GM12878 (cell line): ENCODE measurements at regions of chr11 and their contacts with region 1.

Region 1: DNA sequence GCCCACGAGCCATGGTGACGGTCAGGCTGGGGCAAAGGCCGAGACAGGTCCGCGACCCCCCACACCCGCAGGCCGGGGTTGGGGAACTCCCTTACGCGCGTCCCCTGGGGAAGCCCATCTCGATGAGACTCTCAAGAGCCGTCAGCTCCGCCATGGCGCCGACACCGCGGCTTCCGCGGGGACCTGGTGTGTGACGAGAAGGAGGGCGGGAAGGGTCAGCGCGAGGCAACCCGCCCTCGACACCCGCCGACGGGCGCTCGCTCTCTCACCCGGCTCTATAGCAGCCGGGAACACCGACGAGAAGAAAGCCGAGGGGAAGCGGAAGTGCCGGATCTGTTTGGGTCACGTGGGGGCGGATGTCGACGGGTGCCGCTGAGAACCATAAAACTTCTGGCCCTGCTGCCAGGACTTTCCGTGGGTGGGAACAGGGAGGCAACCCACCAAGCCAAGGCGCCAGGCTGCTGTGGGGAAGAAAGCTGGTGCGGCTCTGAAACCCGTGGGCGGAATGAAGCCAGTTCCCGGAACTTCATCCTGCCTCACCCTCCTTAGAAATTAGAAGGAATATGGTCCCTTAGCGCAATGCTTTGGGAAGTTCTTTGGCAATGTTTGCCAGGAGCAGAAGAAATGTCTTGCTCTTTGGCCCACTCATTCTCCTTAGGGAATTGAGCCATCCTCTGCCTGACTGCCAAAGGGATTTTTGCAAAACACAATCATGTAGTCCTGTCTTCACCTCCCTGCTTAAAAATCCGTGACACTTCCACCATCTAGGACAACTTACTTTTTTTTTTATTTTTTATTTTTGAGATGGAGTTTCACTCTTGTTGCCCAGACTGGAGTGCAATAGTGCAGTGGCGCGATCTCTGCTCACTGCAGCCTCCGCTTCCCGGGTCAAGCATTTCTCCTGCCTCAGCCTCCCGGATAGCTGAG is at the start of gene UBXN1:
- DNase-seq: no peak
- ATAC-seq: peak; percentile 90
- H3K4me3 ChIP-seq: peak within 1 kb of the TSS; percentile 89
- H3K27ac ChIP-seq: peak within 1 kb of the TSS; percentile 94
- H3K4me1 ChIP-seq: peaks cover 11% of the 10 kb centered on the region
- H3K27me3 ChIP-seq: no peaks in the 10 kb centered on the region
- CTCF ChIP-seq: no peak
- EP300 ChIP-seq: peak in 1 of 2 experiments; percentile 42; a peak in 1 of 4 replicates
- POLR2A ChIP-seq: peak; percentile 94
- RAD21 ChIP-seq: no peak
- polyA plus RNA-seq, gene UBXN1: 7.0 to 20.7 TPM

Region 2: DNA sequence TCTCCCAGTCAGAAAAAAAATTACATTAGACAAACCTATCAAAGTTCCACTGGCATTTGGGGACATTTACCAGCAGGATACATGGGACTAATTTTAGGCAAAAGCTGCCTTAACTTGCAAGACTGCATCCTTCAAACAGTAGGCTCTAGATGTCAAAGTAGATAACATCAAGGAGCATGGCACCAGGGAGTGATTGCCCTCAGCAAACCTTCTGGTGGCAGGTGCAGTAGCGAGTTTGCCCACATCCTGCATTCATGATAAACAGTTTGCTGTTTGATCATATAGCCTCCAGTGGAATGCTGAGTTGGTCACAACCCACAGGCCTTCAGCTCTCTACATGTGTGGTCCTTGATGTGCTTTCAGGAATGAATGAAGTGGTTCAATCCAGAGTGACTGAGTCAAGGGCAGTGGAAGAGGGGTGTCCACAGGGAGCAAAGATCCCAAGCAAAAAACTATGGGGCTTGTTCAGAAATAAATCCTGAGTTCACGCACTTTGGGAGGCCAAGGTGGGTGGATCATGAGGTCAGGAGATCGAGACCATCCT is 425.0 kb before region 1 on chr11:
- CTCF ChIA-PET with region 1: no interaction called
- POLR2A ChIA-PET with region 1: no interaction called
- RAD21 ChIA-PET with region 1: no interaction called
- SMC1A ChIA-PET with region 1: no interaction called
- in situ Hi-C with region 1: no loop called
- intact Hi-C with region 1: no loop called
- DNase-seq: no peak
- ATAC-seq: no peak
- H3K4me3 ChIP-seq: no peak overlapping the region
- H3K27ac ChIP-seq: no peak overlapping the region
- H3K4me1 ChIP-seq: no peaks in the 10 kb centered on the region
- H3K27me3 ChIP-seq: no peaks in the 10 kb centered on the region
- CTCF ChIP-seq: no peak
- EP300 ChIP-seq: no peak
- POLR2A ChIP-seq: no peak
- RAD21 ChIP-seq: no peak

Region 3: DNA sequence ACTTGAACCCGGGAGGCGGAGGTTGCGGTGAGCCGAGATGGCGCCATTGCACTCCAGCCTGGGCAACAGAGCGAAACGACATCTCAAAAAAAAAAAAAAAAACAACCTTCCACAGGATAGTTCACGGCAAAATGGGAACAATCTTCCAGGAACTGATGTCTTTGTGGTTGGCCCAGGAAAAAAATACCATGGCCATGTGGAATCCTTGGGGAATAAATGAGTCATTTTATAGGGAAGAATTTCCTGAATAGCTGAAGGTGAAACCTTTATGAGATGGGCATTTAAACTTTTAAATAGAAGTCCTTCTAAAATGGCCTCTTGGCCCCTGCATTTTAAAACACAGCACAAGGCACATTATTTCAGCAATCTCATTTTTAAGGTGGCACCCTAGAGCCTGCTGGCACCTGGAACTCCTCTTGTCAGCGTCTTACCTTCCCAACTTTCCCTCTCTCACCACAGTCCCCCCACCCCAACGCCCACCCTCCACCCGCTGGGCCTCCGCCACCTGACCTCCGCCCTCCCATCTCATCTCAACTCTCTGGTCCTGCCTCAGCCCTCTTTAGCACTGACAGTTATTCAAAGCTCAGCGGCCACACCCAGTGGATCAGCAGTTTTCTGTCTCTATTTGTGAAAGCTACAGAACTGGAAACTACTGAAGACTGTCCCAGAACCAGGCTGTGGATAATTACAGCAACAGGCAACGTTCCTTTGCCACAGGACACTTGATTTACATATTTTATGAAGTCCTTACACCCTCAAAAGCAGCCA is 217.1 kb before region 1 on chr11:
- CTCF ChIA-PET with region 1: no interaction called
- POLR2A ChIA-PET with region 1: no interaction called
- RAD21 ChIA-PET with region 1: no interaction called
- SMC1A ChIA-PET with region 1: no interaction called
- in situ Hi-C with region 1: no loop called
- intact Hi-C with region 1: loop called (anchors 10 kb)
- DNase-seq: no peak
- ATAC-seq: no peak
- H3K4me3 ChIP-seq: no peak overlapping the region
- H3K27ac ChIP-seq: no peak overlapping the region
- H3K4me1 ChIP-seq: peaks cover 9% of the 10 kb centered on the region; the same call in 1 of the 2 replicates
- H3K27me3 ChIP-seq: no peaks in the 10 kb centered on the region
- CTCF ChIP-seq: no peak
- EP300 ChIP-seq: no peak
- POLR2A ChIP-seq: no peak
- RAD21 ChIP-seq: no peak

Region 4: GRCh38 chr11:62497132-62497915 is 181.7 kb before region 1 on chr11:
- CTCF ChIA-PET with region 1: no interaction called
- POLR2A ChIA-PET with region 1: no interaction called
- RAD21 ChIA-PET with region 1: no interaction called
- SMC1A ChIA-PET with region 1: no interaction called
- in situ Hi-C with region 1: no loop called
- intact Hi-C with region 1: no loop called
- DNase-seq: peak; percentile 13
- ATAC-seq: peak; percentile 75
- H3K4me3 ChIP-seq: no peak overlapping the region
- H3K27ac ChIP-seq: no peak overlapping the region
- H3K4me1 ChIP-seq: no peaks in the 10 kb centered on the region
- H3K27me3 ChIP-seq: peaks cover 0 to 2% of the 10 kb centered on the region in 2 experiments; a peak in 1 of 4 replicates
- CTCF ChIP-seq: peak; percentile 31 to 53 (median 37); a peak in 4 of 6 replicates
- EP300 ChIP-seq: no peak
- POLR2A ChIP-seq: no peak
- RAD21 ChIP-seq: peak; percentile 57

Region 5: DNA sequence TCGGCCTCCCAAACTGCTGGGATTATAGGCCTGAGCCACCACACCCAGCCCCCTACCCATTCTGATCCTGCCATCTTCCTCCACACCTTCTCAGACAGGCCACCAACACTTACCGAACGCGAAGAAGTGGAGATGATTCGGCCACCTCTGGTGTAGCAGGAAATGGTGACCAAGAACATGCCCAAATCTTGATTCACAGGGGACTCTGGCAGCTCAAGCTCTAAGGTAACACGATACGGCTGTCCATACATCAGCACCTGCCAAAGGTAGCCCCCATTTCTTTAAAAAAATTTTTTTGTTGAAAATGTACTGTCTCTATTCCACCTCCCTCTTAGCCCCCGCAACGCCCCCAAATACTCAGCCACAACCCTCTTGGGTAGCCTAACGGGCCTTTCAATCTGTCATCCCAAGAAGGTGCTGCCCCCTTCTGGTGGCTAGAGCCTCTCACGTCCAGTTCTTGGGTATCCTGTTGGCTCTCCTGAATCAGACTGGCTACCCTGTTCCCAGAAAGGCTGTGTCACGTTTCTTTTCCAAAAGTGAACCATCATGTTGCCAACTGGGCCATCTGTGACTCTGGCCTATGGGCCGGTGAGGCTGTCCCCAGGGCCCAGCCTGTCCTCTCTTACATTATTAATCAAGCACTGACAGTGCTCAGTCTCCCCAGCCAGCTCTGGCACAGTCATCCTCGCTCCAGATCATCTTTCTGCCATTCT is 15.6 kb after region 1 on chr11:
- CTCF ChIA-PET with region 1: interaction called, 24 read pairs
- POLR2A ChIA-PET with region 1: interaction called, 5 read pairs
- RAD21 ChIA-PET with region 1: interaction called, 4 read pairs
- SMC1A ChIA-PET with region 1: interaction called, 5 read pairs
- in situ Hi-C with region 1: no loop called
- intact Hi-C with region 1: no loop called
- DNase-seq: no peak
- ATAC-seq: peak; percentile 99
- H3K4me3 ChIP-seq: no peak overlapping the region
- H3K27ac ChIP-seq: no peak overlapping the region
- H3K4me1 ChIP-seq: no peaks in the 10 kb centered on the region
- H3K27me3 ChIP-seq: no peaks in the 10 kb centered on the region
- CTCF ChIP-seq: peak; percentile 79 to 86 (median 82)
- EP300 ChIP-seq: no peak
- POLR2A ChIP-seq: no peak
- RAD21 ChIP-seq: peak; percentile 83

Region 6: DNA sequence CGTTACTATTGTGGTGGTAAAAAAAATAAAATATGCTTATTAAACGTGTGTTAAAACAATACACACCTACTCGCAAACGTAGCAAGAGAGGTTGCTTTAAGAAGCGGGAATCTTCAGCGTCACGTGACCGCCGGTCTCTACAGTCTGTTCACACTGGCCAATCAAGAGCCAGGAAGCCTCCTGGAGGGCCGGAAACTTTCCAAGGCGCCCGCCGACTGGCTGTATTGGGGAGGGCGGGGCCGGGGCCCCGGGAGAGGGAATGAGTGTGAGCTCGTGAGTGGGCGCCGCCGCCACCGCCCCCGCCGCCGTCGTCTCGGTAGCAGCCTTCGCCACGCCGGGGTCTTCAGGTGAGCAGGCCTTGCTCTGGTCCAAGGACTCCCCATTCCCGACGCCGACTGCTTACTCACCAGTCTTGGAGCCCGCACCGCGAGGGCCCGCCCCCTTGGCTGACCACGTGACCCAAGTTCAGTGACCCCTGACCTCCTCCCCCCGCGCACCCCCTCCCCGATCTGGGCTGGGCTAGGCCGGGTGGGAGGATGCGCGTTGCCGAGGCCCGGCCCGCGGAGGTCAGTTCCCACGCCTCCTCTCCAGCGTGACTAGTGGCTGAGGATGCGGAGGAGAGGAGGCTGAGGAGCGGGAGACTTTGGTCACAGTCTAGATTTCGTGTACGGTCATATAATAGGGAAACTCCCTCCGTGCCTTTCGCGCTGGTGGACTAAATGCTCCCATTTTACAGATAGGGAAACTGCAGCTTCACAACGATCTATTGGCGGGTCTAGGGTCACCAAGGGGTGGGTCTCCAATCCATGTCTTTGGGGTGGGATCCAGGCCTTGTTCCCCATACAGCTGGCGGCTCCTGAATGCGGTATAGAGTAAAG is 92.3 kb after region 1 on chr11 and contains the start of gene TAF6L:
- CTCF ChIA-PET with region 1: interaction called, 18 read pairs
- POLR2A ChIA-PET with region 1: interaction called, 3 read pairs
- RAD21 ChIA-PET with region 1: interaction called, 4 read pairs
- SMC1A ChIA-PET with region 1: interaction called, 5 read pairs
- in situ Hi-C with region 1: no loop called
- intact Hi-C with region 1: no loop called
- DNase-seq: peak; percentile 77
- ATAC-seq: peak; percentile 92
- H3K4me3 ChIP-seq: peak within 1 kb of the TSS; percentile 86
- H3K27ac ChIP-seq: peak within 1 kb of the TSS; percentile 82
- H3K4me1 ChIP-seq: peaks cover 17% of the 10 kb centered on the region
- H3K27me3 ChIP-seq: no peaks in the 10 kb centered on the region
- CTCF ChIP-seq: no peak
- EP300 ChIP-seq: 0 out of 4 replicates have a peak, but pooled peaks of 1 of the 2 experiments have one; percentile 6
- POLR2A ChIP-seq: peak; percentile 83
- RAD21 ChIP-seq: no peak
- polyA plus RNA-seq, gene TAF6L: 0.15 to 0.39 TPM

Region 7: DNA sequence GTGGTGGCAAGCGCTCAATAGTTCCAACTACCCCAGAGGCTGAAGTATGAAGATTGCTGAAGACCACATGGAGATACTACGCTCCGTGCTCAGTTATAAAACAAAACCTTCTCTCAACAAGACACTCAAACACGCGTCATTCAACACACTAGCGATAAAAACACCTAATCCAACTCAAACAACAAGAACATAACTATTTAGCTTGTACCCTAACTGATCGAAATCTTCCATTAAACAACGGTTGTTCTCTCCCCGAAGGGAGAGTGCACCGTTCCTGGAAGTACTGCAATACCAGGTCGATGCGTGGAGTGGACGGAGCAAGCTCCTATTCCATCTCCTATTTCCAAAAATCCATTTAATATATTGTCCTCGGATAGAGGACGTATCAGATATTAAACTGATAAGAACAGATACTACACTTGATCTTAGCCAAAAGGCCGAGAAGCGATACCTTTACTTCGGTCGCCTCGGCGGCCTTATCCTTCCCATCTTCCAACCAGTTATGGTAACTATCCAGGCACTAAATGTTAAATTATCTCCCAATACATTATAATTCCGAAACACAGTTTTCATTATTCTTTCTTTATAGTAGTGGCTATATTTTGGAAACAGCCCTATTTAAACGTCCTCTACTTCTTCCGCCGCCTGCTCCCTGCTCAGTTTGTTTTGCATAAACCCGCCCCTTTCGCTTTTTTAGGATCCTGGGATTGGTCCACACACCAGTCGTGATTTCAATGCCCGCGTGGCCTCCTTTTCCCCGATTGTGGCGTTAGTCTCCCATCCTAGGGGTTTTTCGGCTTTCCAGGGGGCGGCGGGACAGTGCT is 162.5 kb after region 1 on chr11:
- CTCF ChIA-PET with region 1: interaction called, 3 read pairs
- POLR2A ChIA-PET with region 1: no interaction called
- RAD21 ChIA-PET with region 1: no interaction called
- SMC1A ChIA-PET with region 1: no interaction called
- in situ Hi-C with region 1: no loop called
- intact Hi-C with region 1: loop called (anchors 2 kb)
- DNase-seq: peak; percentile 100
- ATAC-seq: peak; percentile 83
- H3K4me3 ChIP-seq: peak overlapping the region; percentile 68; the same call in 1 of the 2 replicates
- H3K27ac ChIP-seq: peak overlapping the region; percentile 99
- H3K4me1 ChIP-seq: peaks cover 7% of the 10 kb centered on the region
- H3K27me3 ChIP-seq: no peaks in the 10 kb centered on the region
- CTCF ChIP-seq: peak in 1 of 3 experiments; percentile 21; a peak in 1 of 6 replicates
- EP300 ChIP-seq: peak in 1 of 2 experiments; percentile 72; a peak in 1 of 4 replicates
- POLR2A ChIP-seq: peak; percentile 92
- RAD21 ChIP-seq: no peak

Region 8: DNA sequence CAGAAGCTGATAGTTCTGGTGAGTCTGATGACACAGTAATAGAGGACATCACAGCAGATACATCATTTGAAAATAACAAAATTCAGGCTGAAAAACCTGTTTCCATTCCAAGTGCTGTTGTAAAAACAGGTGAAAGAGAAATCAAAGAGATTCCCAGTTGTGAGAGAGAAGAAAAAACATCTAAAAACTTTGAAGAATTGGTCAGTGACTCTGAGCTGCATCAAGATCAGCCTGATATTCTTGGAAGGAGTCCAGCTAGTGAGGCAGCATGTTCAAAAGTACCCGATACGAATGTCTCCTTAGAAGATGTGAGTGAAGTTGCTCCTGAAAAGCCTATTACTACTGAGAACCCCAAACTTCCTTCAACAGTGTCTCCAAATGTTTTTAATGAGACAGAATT is 1040.9 kb after region 1 on chr11:
- CTCF ChIA-PET with region 1: no interaction called
- POLR2A ChIA-PET with region 1: interaction called, 11 read pairs
- RAD21 ChIA-PET with region 1: no interaction called
- SMC1A ChIA-PET with region 1: no interaction called
- in situ Hi-C with region 1: no loop called
- intact Hi-C with region 1: no loop called
- DNase-seq: no peak
- ATAC-seq: no peak
- H3K4me3 ChIP-seq: no peak overlapping the region
- H3K27ac ChIP-seq: no peak overlapping the region
- H3K4me1 ChIP-seq: no peaks in the 10 kb centered on the region
- H3K27me3 ChIP-seq: no peaks in the 10 kb centered on the region
- CTCF ChIP-seq: no peak
- EP300 ChIP-seq: no peak
- POLR2A ChIP-seq: no peak
- RAD21 ChIP-seq: no peak